ENCODE measurements at regions of chr22 and their contacts with region 1.

Region 1: GRCh38 chr22:41285820-41286638 is at the start of gene RANGAP1:
- DNase-seq: peak; percentile 96 to 100 (median 99)
- ATAC-seq: peak; percentile 89 to 97 (median 94)
- H3K4me3 ChIP-seq: peak within 1 kb of the TSS; percentile 66 to 90
- H3K4me3 Mint-ChIP-seq: peak within 1 kb of the TSS; percentile 89 to 98 (median 96)
- H3K27ac ChIP-seq: peak within 1 kb of the TSS; percentile 93
- H3K27ac Mint-ChIP-seq: peak within 1 kb of the TSS; percentile 99
- H3K4me1 ChIP-seq: peaks cover 13 to 35% of the 10 kb centered on the region in 2 experiments
- H3K4me1 Mint-ChIP-seq: peaks cover 31 to 37% (median 34%) of the 10 kb centered on the region in 3 donors
- H3K27me3 ChIP-seq: no peaks in the 10 kb centered on the region
- H3K27me3 Mint-ChIP-seq: no peaks in the 10 kb centered on the region
- total RNA-seq, gene RANGAP1: 95.0 to 113 (median 104) TPM

Region 2: DNA sequence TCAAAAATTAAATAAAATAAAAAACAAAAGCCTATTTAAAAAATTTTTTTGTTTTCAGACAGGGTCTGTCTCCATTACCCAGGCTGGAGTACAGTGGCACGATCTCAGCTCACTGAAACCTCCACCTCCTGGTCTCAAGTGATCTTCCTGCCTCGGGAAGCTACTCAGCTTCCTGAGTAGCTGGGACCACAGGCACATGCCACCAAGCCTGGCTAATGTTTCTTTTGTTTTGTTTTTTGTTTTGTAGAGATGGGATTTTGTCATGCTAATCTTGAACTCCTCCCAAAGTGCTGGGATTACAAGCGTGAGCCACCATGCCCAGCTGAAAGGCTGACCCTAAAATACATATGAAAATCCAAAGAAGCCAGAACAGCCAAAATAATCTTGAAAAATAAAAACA is 101.3 kb before region 1 on chr22:
- CTCF ChIA-PET with region 1: no interaction called
- POLR2A ChIA-PET with region 1: no interaction called
- DNase-seq: no peak
- ATAC-seq: no peak
- H3K4me3 ChIP-seq: no peak overlapping the region
- H3K4me3 Mint-ChIP-seq: no peak overlapping the region
- H3K27ac ChIP-seq: no peak overlapping the region
- H3K27ac Mint-ChIP-seq: no peak overlapping the region
- H3K4me1 ChIP-seq: no peaks in the 10 kb centered on the region
- H3K4me1 Mint-ChIP-seq: peaks cover 0 to 3% (median 2%) of the 10 kb centered on the region in 3 donors
- H3K27me3 ChIP-seq: no peaks in the 10 kb centered on the region
- H3K27me3 Mint-ChIP-seq: no peaks in the 10 kb centered on the region

Region 3: GRCh38 chr22:41197038-41197972 is 88.7 kb before region 1 on chr22:
- CTCF ChIA-PET with region 1: no interaction called
- POLR2A ChIA-PET with region 1: no interaction called
- DNase-seq: peak; percentile 45 to 91 (median 70)
- ATAC-seq: peak; percentile 89 to 95 (median 94)
- H3K4me3 ChIP-seq: peak overlapping the region; percentile 86 to 87
- H3K4me3 Mint-ChIP-seq: peak overlapping the region; percentile 88 to 91 (median 89)
- H3K27ac ChIP-seq: no peak overlapping the region
- H3K27ac Mint-ChIP-seq: peak overlapping the region in 1 of 2 donors; percentile 34
- H3K4me1 ChIP-seq: peaks cover 9 to 18% of the 10 kb centered on the region in 2 experiments
- H3K4me1 Mint-ChIP-seq: peaks cover 11 to 20% (median 11%) of the 10 kb centered on the region in 3 donors
- H3K27me3 ChIP-seq: peaks cover 0 to 4% of the 10 kb centered on the region in 2 experiments
- H3K27me3 Mint-ChIP-seq: no peaks in the 10 kb centered on the region

Region 4: DNA sequence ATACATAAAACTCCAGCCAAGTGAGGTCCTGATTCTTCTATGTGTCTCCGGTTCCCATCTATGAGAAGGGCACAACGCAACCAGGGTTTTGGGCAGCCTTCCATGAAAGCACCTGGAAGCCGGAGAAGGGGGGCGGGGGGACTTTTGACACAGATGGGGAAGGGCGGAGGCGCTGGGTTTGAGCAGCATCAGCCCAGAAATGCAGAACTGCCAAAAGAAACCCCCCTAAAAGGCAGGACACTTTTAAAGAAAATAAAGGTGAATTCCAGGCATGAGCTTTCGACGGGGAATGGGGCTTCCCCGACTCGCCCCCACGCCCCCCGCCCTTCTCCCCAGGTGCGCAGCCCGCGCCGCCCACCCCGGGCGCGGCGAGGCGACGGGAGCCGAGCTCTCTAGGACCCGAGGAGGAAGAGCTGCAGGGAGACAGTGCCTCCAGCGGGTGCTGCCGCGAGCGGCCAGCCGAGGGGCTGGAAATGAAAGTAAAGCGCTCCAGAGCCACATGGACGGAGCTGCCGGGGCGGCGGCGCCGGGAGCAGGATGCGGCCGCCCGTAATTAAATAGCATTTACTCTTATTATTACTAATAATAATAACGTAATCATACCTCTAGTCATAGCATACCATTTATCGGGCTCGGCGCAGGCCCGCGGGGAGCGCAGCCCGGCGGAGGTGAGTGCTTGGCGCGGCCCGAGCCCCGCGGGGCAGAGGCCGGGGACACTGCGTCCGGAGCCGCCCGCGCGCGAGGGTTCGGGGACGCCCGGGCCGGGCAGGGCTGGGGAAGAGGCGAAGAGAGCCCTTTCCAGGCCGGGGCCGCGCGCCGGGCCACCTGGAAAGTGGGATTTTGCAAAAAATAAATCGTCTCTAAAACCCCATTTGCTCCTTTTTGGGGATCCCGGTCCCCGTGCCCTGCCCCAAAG is 15.3 kb after region 1 on chr22 and contains the start of gene ZC3H7B:
- CTCF ChIA-PET with region 1: interaction called in 1 of 2 experiments, 9 read pairs
- POLR2A ChIA-PET with region 1: interaction called, 7 to 10 read pairs
- DNase-seq: peak; percentile 64 to 92 (median 82)
- ATAC-seq: peak; percentile 97 to 98 (median 98)
- H3K4me3 ChIP-seq: peak within 1 kb of the TSS; percentile 85 to 97
- H3K4me3 Mint-ChIP-seq: peak within 1 kb of the TSS; percentile 71 to 81 (median 74)
- H3K27ac ChIP-seq: peak within 1 kb of the TSS; percentile 92
- H3K27ac Mint-ChIP-seq: peak within 1 kb of the TSS; percentile 85 to 87
- H3K4me1 ChIP-seq: peaks cover 3 to 24% of the 10 kb centered on the region in 2 experiments
- H3K4me1 Mint-ChIP-seq: peaks cover 25 to 33% (median 32%) of the 10 kb centered on the region in 3 donors
- H3K27me3 ChIP-seq: peaks cover 0 to 2% of the 10 kb centered on the region in 2 experiments
- H3K27me3 Mint-ChIP-seq: no peaks in the 10 kb centered on the region
- total RNA-seq, gene ZC3H7B: 38.5 to 50.3 (median 47.9) TPM

Region 5: DNA sequence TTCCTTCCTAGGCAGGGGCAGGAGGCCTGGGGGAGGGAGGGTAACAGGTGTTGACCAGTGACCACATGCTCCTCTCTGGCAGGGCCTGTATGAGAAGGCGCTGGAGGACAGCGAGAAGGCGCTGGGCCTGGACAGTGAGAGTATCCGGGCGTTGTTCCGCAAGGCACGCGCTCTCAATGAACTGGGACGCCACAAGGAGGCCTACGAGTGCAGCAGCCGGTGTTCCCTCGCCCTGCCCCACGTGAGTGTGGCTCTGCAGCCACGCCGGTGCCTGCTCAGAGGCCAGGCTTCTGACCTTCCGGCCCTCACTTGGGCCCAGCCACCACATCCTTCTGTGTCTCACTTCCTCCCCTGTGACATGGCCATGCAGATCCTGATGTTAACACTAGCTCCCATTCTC is 41.1 kb after region 1 on chr22:
- CTCF ChIA-PET with region 1: no interaction called
- POLR2A ChIA-PET with region 1: no interaction called
- DNase-seq: no peak
- ATAC-seq: no peak
- H3K4me3 ChIP-seq: no peak overlapping the region
- H3K4me3 Mint-ChIP-seq: no peak overlapping the region
- H3K27ac ChIP-seq: no peak overlapping the region
- H3K27ac Mint-ChIP-seq: no peak overlapping the region
- H3K4me1 ChIP-seq: no peaks in the 10 kb centered on the region
- H3K4me1 Mint-ChIP-seq: peaks cover 0 to 7% (median 0%) of the 10 kb centered on the region in 3 donors
- H3K27me3 ChIP-seq: no peaks in the 10 kb centered on the region
- H3K27me3 Mint-ChIP-seq: no peaks in the 10 kb centered on the region

Measured in T-cell (primary cell).